ENCODE measurements at regions of chr19 and their contacts with region 1.

Region 1: GRCh38 chr19:16088351-16089009 is 12.2 kb downstream of the TPM4 start:
- DNase-seq: no peak
- H3K4me3 ChIP-seq: no peak overlapping the region
- H3K4me3 Mint-ChIP-seq: peak overlapping the region in 1 of 7 donors; percentile 38
- H3K27ac ChIP-seq: no peak overlapping the region
- H3K27ac Mint-ChIP-seq: peak overlapping the region in 3 of 8 donors; percentile 41 to 80 (median 72)
- H3K4me1 ChIP-seq: peaks cover 30% of the 10 kb centered on the region
- H3K4me1 Mint-ChIP-seq: peaks cover 32 to 36% (median 35%) of the 10 kb centered on the region in 3 donors
- H3K27me3 ChIP-seq: no peaks in the 10 kb centered on the region
- H3K27me3 Mint-ChIP-seq: no peaks in the 10 kb centered on the region

Region 2: DNA sequence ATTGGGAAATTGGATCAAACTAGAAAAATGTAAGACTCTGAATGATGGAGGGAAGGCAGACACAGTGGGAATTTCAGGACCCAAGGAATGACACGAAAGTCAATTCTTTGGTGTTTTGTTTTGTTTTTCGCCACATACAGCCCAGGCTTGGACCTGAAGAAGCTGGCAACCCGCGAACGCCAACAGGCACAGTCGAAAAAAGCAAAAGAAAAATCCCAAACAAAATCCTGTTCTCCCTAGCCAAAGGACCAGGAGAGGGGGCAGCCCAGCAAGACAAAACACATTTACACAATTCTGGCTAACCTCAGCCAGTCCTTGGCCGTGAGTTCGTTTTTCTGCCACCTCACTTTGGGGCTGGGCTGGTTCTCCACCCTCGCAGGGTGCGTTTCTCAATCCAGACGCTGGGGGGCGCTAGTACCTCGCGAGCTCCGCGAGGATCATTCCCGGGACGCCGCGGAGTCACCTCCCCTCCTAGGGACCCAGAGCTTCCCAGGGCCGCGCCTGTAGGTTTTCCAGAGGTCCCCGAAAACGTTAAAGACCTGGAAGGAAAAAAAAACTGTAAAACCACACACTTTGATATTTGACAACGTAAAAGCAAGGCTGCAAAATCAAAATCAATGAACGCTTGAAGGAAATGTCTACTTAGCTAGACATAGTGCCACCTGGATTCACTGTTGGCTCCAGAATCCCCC is 47.0 kb before region 1 on chr19:
- CTCF ChIA-PET with region 1: interaction called, 14 read pairs
- POLR2A ChIA-PET with region 1: no interaction called
- DNase-seq: peak; percentile 58 to 80 (median 67)
- H3K4me3 ChIP-seq: no peak overlapping the region
- H3K4me3 Mint-ChIP-seq: peak overlapping the region in 4 of 7 donors; percentile 31 to 50 (median 46)
- H3K27ac ChIP-seq: no peak overlapping the region
- H3K27ac Mint-ChIP-seq: no peak overlapping the region
- H3K4me1 ChIP-seq: peaks cover 9% of the 10 kb centered on the region
- H3K4me1 Mint-ChIP-seq: peaks cover 7 to 16% (median 14%) of the 10 kb centered on the region in 3 donors
- H3K27me3 ChIP-seq: no peaks in the 10 kb centered on the region
- H3K27me3 Mint-ChIP-seq: no peaks in the 10 kb centered on the region

Region 3: DNA sequence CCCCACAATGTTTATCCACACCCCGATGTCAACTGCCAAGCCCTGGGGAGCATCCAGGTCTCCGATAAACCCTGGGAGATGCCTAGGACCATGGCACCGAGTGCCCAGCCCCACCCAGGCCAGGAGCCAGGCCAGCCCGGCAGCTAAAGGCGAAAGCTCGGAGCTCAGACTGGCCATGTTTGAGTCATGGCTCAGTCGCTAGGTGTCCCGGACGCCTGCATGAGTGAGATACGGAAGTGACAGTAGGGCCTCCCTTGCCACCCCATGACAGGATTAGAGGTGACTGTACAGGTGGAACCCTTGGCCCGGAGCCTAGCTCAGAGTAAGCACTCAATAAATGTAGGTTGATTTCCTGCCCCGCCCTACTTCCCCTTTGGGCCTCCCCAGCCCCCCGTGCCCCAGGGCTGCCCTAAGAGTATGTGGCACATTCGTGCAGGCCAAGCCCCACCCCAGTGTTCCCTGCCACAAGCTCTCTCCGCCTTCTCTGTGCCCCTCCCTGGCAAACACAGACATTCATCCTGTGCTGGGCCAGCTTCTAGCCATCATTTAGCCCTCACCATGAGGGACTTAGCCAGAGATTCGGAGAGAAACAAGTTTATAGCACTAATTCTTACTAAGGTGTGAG is 18.0 kb before region 1 on chr19:
- CTCF ChIA-PET with region 1: interaction called, 65 read pairs
- POLR2A ChIA-PET with region 1: interaction called, 16 read pairs
- DNase-seq: peak; percentile 76 to 95 (median 88)
- H3K4me3 ChIP-seq: peak overlapping the region; percentile 60
- H3K4me3 Mint-ChIP-seq: peak overlapping the region in 4 of 7 donors; percentile 45 to 74 (median 70)
- H3K27ac ChIP-seq: peak overlapping the region; percentile 86
- H3K27ac Mint-ChIP-seq: no peak overlapping the region
- H3K4me1 ChIP-seq: peaks cover 67% of the 10 kb centered on the region
- H3K4me1 Mint-ChIP-seq: peaks cover 22 to 38% (median 29%) of the 10 kb centered on the region in 3 donors
- H3K27me3 ChIP-seq: no peaks in the 10 kb centered on the region
- H3K27me3 Mint-ChIP-seq: peaks cover 0 to 1% of the 10 kb centered on the region in 2 donors

Region 4: DNA sequence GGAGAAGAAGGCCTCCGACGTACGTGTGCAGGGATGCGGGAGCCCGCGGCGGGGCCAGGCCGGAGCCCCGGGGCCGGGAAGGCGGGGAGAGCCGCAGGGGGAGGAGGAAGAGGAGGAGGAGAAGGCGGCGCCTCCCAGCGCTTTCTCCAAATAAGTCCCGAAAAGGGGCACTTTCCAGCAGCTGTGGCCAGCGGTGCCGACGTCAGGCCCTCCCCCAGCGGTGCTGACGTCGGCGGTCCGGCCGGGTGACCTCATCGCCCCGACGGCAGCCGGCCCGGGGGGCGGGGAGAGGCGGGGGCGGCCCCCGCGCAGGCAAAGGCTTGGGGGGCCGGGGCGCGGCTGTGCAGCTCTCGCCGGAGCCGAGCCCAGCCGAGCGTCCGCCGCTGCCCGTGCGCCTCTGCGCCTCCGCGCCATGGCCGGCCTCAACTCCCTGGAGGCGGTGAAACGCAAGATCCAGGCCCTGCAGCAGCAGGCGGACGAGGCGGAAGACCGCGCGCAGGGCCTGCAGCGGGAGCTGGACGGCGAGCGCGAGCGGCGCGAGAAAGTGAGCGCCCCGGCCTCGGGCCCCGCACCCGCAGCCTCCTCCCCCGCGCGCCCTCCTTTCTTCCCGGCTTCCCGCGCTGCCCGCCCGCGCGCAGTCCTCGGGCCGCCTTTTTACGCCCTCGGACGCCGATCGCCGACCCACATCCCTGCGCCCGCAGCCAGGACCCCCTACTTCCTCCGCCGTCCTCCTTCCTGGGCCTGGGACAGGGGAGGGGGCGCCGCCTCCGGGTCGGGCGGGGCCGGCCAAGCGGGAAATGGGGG is 12.1 kb before region 1 on chr19 and contains the start of gene TPM4:
- CTCF ChIA-PET with region 1: interaction called, 25 read pairs
- POLR2A ChIA-PET with region 1: interaction called, 16 read pairs
- DNase-seq: peak; percentile 71 to 87 (median 82)
- H3K4me3 ChIP-seq: peak within 1 kb of the TSS; percentile 69
- H3K4me3 Mint-ChIP-seq: peak within 1 kb of the TSS; percentile 77 to 95 (median 88)
- H3K27ac ChIP-seq: peak within 1 kb of the TSS; percentile 83
- H3K27ac Mint-ChIP-seq: peak within 1 kb of the TSS; percentile 93 to 98 (median 98)
- H3K4me1 ChIP-seq: peaks cover 74% of the 10 kb centered on the region
- H3K4me1 Mint-ChIP-seq: peaks cover 58 to 78% (median 64%) of the 10 kb centered on the region in 3 donors
- H3K27me3 ChIP-seq: no peaks in the 10 kb centered on the region
- H3K27me3 Mint-ChIP-seq: peaks cover 0 to 1% of the 10 kb centered on the region in 2 donors
- total RNA-seq, gene TPM4: 259 to 270 TPM

Region 5: GRCh38 chr19:17266975-17267788 is 1178.7 kb after region 1 on chr19 and contains the start of gene BABAM1:
- CTCF ChIA-PET with region 1: no interaction called
- POLR2A ChIA-PET with region 1: interaction called, 10 read pairs
- DNase-seq: peak; percentile 87 to 98 (median 96)
- H3K4me3 ChIP-seq: peak within 1 kb of the TSS; percentile 96
- H3K4me3 Mint-ChIP-seq: peak within 1 kb of the TSS; percentile 77 to 90 (median 83)
- H3K27ac ChIP-seq: peak within 1 kb of the TSS; percentile 85
- H3K27ac Mint-ChIP-seq: peak within 1 kb of the TSS; percentile 73 to 92 (median 76)
- H3K4me1 ChIP-seq: peaks cover 21% of the 10 kb centered on the region
- H3K4me1 Mint-ChIP-seq: peaks cover 18 to 25% (median 18%) of the 10 kb centered on the region in 3 donors
- H3K27me3 ChIP-seq: no peaks in the 10 kb centered on the region
- H3K27me3 Mint-ChIP-seq: no peaks in the 10 kb centered on the region
- total RNA-seq, gene BABAM1: 124 to 132 TPM

Measured in CD8-positive, alpha-beta memory T cell (primary cell).